ENCODE measurements at regions of chr16 and their contacts with region 1.

Region 1: DNA sequence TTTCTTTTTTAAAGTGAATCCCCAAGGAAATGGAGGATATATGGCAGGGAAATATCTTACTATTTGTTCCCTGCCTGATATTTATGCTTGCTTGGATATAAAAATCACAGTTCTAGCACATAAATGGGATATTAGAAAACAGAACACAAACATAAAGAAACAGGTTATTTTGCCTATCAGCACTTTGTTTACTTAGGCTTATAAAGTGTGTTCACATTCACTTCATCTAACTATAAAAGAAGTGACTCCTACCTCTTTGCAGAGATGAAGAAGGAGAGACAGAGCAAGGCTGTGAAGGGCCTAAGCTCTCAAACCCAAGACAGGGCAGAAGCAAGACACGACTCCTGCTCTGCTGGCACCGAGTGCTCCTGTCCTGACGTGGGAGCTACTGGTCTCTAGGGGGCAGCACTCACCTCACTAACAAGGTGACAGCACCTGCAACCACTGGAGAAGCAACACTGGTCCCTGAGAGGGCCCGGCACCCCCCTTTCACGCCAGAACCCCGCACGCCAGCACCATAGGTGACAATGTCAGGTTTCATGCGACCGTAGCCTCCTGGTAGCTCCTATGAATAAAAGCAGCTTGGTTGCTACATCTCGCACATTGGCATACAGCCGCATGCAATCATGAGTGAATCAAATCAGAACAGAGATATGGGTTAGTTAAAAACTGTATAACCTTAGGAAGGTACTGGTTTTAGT is 32.0 kb downstream of the MBTPS1 start:
- DNase-seq: peak; percentile 28
- ATAC-seq: peak; percentile 90
- H3K4me3 ChIP-seq: no peak overlapping the region
- H3K27ac ChIP-seq: no peak overlapping the region
- H3K4me1 ChIP-seq: peaks cover 47% of the 10 kb centered on the region
- H3K27me3 ChIP-seq: no peaks in the 10 kb centered on the region
- CTCF ChIP-seq: peak; percentile 84 to 88 (median 84)
- EP300 ChIP-seq: no peak
- POLR2A ChIP-seq: peak; percentile 47; the same call in 1 of the 2 replicates
- RAD21 ChIP-seq: peak; percentile 73

Region 2: DNA sequence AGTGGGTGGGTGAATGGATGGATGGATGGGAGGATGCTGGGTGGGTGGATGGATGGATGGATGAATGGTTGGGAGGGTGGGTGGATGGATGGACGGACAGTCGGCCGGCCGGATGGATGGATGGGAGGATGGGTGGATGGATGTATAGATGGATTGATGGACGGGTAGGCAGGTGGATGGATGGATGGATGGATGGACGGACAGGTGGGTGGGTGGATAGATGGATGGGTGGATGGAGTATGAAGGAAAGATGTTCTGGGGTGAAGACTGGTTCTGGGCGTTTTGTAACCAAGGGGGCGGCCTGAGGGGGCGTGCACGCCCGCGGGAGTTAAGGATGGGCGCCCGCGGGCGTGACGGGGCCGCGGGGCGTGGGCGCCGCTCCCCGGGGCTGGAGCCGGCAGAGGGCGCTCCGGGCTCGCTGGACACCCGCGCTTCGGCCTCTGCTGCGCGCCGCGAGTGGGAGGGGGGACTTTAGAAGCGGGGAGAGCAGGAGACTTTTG is 116.9 kb before region 1 on chr16 and contains the start of gene NECAB2:
- CTCF ChIA-PET with region 1: no interaction called
- POLR2A ChIA-PET with region 1: no interaction called
- RAD21 ChIA-PET with region 1: no interaction called
- SMC1A ChIA-PET with region 1: no interaction called
- in situ Hi-C with region 1: no loop called
- intact Hi-C with region 1: no loop called
- DNase-seq: no peak
- ATAC-seq: peak; percentile 86
- H3K4me3 ChIP-seq: no peak within 1 kb of the TSS
- H3K27ac ChIP-seq: no peak within 1 kb of the TSS
- H3K4me1 ChIP-seq: no peaks in the 10 kb centered on the region
- H3K27me3 ChIP-seq: no peaks in the 10 kb centered on the region
- CTCF ChIP-seq: peak; percentile 22 to 56 (median 51); a peak in 4 of 6 replicates
- EP300 ChIP-seq: no peak
- POLR2A ChIP-seq: no peak
- RAD21 ChIP-seq: peak; percentile 59
- polyA plus RNA-seq, gene NECAB2: not detected

Region 3: GRCh38 chr16:84103678-84104077 is 19.0 kb after region 1 on chr16:
- CTCF ChIA-PET with region 1: interaction called, 8 read pairs
- POLR2A ChIA-PET with region 1: no interaction called
- RAD21 ChIA-PET with region 1: no interaction called
- SMC1A ChIA-PET with region 1: interaction called, 10 read pairs
- in situ Hi-C with region 1: no loop called
- intact Hi-C with region 1: no loop called
- DNase-seq: no peak
- ATAC-seq: no peak
- H3K4me3 ChIP-seq: no peak overlapping the region
- H3K27ac ChIP-seq: no peak overlapping the region
- H3K4me1 ChIP-seq: no peaks in the 10 kb centered on the region; the same call in 1 of the 2 replicates
- H3K27me3 ChIP-seq: no peaks in the 10 kb centered on the region
- CTCF ChIP-seq: no peak
- EP300 ChIP-seq: no peak
- POLR2A ChIP-seq: no peak
- RAD21 ChIP-seq: no peak

Region 4: DNA sequence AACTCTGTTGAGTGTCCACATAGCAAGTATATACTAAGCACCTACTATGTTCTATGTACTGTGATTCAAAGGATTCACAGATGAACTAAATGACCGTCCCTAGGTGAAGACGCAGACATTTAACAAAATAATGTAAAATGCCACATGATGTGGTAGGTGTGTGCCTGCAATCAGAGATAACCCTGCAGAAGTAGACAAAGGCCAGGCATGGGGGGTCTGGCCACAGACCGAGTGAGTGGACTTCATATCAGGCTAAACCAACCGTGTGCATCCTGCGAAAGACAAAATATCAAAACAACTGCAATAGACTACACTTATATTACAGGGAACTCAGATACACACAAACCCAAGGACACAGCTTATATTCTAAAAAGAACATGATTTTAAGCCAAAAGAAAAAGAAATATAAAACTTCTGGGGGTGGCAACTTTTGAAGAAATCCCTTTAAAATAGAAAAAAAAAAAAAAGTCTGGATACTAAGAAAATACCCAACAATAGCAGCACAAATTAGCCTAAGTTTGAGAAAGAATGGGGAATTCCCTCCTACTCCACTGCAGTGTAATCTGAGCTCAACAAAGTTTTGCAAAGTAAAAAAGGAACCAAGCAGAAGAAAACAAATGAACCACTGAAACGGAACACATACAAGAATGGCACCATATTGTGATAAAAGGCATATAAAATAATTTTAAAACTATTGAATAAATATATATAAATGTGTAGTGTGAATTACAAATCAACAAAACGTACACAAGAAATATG is 48.0 kb after region 1 on chr16:
- CTCF ChIA-PET with region 1: interaction called, 13 read pairs
- POLR2A ChIA-PET with region 1: no interaction called
- RAD21 ChIA-PET with region 1: no interaction called
- SMC1A ChIA-PET with region 1: interaction called, 3 read pairs
- in situ Hi-C with region 1: no loop called
- intact Hi-C with region 1: no loop called
- DNase-seq: no peak
- ATAC-seq: peak; percentile 60
- H3K4me3 ChIP-seq: no peak overlapping the region
- H3K27ac ChIP-seq: no peak overlapping the region
- H3K4me1 ChIP-seq: peaks cover 2% of the 10 kb centered on the region; the same call in 1 of the 2 replicates
- H3K27me3 ChIP-seq: no peaks in the 10 kb centered on the region
- CTCF ChIP-seq: no peak
- EP300 ChIP-seq: no peak
- POLR2A ChIP-seq: no peak
- RAD21 ChIP-seq: no peak

Region 5: GRCh38 chr16:84175350-84176081 is 90.8 kb after region 1 on chr16:
- CTCF ChIA-PET with region 1: interaction called, 82 read pairs
- POLR2A ChIA-PET with region 1: no interaction called
- RAD21 ChIA-PET with region 1: interaction called, 13 read pairs
- SMC1A ChIA-PET with region 1: interaction called, 12 read pairs
- in situ Hi-C with region 1: no loop called
- intact Hi-C with region 1: loop called (anchors 1 kb)
- DNase-seq: peak; percentile 19
- ATAC-seq: peak; percentile 89
- H3K4me3 ChIP-seq: no peak overlapping the region
- H3K27ac ChIP-seq: no peak overlapping the region
- H3K4me1 ChIP-seq: peaks cover 13% of the 10 kb centered on the region
- H3K27me3 ChIP-seq: no peaks in the 10 kb centered on the region
- CTCF ChIP-seq: peak; percentile 70 to 75 (median 75)
- EP300 ChIP-seq: no peak
- POLR2A ChIP-seq: no peak
- RAD21 ChIP-seq: peak; percentile 68

Region 6: DNA sequence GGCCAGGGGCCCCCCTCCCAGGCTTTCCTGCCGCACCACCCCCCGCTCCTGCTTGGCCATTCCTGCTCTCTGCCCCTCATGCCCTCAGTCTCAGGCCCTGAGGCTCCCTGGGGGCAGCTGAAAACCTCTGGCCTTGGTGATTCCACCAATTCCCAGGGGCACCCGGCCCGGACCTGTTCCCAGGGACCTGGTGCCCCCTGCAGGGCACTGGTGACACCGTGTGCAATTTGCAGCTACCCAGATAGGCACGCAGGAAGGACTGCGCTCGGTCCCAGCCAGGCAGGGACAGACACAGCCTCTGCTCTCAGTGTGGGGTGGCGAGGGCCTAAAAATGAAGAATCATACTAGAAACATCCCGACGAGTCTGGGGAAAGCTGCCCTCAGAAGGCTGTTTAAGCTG is 223.4 kb after region 1 on chr16:
- CTCF ChIA-PET with region 1: no interaction called
- POLR2A ChIA-PET with region 1: no interaction called
- RAD21 ChIA-PET with region 1: no interaction called
- SMC1A ChIA-PET with region 1: no interaction called
- in situ Hi-C with region 1: no loop called
- intact Hi-C with region 1: loop called (anchors 5 kb)
- DNase-seq: no peak
- ATAC-seq: peak; percentile 78
- H3K4me3 ChIP-seq: no peak overlapping the region
- H3K27ac ChIP-seq: no peak overlapping the region
- H3K4me1 ChIP-seq: no peaks in the 10 kb centered on the region
- H3K27me3 ChIP-seq: no peaks in the 10 kb centered on the region; a peak in 1 of 4 replicates
- CTCF ChIP-seq: peak; percentile 16 to 52 (median 41); a peak in 3 of 6 replicates
- EP300 ChIP-seq: no peak
- POLR2A ChIP-seq: no peak
- RAD21 ChIP-seq: peak; percentile 35; the same call in 1 of the 2 replicates